ENCODE measurements at regions of chr6 and their contacts with region 1.

Region 1: DNA sequence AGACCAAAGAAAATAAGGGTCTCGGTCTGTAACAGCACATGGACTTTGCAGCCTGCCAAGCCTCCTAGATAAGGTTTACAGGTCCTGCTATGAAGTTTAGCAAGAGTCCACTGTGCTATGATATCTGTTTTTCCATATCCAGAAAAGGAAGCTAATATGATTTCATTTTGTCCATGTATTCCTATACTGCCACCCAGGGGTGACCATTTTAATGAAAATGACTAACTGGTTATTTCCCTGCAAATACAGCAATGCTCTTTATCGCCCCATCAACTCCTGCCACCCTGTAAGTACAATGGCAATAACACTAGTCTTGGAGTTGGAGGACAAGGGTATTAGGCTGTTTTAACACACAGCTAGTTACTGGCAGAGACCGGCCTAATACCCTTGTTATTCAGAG is 115.1 kb upstream of the GLP1R start:
- DNase-seq: peak; percentile 71
- ATAC-seq: peak; percentile 90
- H3K4me3 ChIP-seq: no peak overlapping the region
- H3K27ac ChIP-seq: no peak overlapping the region
- H3K4me1 ChIP-seq: no peaks in the 10 kb centered on the region
- H3K27me3 ChIP-seq: peaks cover 78% of the 10 kb centered on the region
- CTCF ChIP-seq: peak; percentile 70

Region 2: GRCh38 chr6:38720295-38720694 is 213.1 kb before region 1 on chr6:
- CTCF ChIA-PET with region 1: no interaction called
- POLR2A ChIA-PET with region 1: no interaction called
- intact Hi-C with region 1: loop called (anchors 10 kb)
- DNase-seq: peak; percentile 60
- ATAC-seq: peak; percentile 54
- H3K4me3 ChIP-seq: no peak overlapping the region
- H3K27ac ChIP-seq: no peak overlapping the region
- H3K4me1 ChIP-seq: peaks cover 9% of the 10 kb centered on the region; the same call in 1 of the 2 replicates
- H3K27me3 ChIP-seq: no peaks in the 10 kb centered on the region
- CTCF ChIP-seq: peak; percentile 62

Region 3: GRCh38 chr6:38806271-38806670 is 127.2 kb before region 1 on chr6:
- CTCF ChIA-PET with region 1: interaction called, 4 read pairs
- POLR2A ChIA-PET with region 1: no interaction called
- intact Hi-C with region 1: loop called (anchors 1 kb)
- DNase-seq: no peak
- ATAC-seq: peak; percentile 73; the same call in 1 of the 2 replicates
- H3K4me3 ChIP-seq: no peak overlapping the region
- H3K27ac ChIP-seq: no peak overlapping the region
- H3K4me1 ChIP-seq: peaks cover 17% of the 10 kb centered on the region; the same call in 1 of the 2 replicates
- H3K27me3 ChIP-seq: no peaks in the 10 kb centered on the region
- CTCF ChIP-seq: peak; percentile 37; the same call in 1 of the 2 replicates

Region 4: DNA sequence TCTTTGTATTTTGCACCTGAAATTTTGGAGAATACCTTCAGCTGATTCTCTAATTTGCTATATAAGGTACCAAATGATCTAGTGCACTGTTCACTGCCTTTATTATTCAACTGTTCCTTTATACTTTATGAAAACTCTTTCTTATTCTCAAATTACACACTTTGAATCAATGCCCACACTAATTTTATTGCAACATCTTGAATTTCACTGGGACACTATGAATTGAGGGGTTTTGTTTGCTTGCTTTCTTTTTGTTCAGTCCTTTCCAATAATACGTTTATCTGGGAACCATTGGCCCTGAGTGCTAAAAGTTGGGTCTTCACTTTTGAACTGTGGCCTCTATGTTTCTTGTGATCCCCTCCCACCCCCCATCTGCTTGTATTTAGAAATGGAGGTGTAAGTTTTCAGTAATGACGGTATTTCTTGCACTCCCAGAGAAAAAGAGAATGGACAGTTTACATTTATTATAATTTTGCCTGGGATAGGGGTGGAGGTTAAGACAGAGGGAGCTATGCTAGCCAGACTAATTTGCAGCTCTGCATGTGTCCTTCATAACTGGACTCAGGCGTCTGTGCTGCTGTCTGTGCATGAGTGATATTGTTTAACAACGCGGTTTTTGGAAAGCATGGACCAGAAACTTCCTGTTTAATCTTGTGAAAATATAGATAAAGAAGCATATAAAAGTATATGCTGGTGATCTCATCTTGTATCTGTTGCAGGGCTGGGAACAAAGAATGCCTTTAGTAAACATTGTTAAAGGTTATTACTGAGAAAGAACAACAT is 120.2 kb before region 1 on chr6:
- CTCF ChIA-PET with region 1: no interaction called
- POLR2A ChIA-PET with region 1: no interaction called
- intact Hi-C with region 1: loop called (anchors 2 kb)
- DNase-seq: peak; percentile 84
- ATAC-seq: peak; percentile 95
- H3K4me3 ChIP-seq: peak overlapping the region; percentile 46
- H3K27ac ChIP-seq: peak overlapping the region; percentile 85
- H3K4me1 ChIP-seq: peaks cover 29% of the 10 kb centered on the region
- H3K27me3 ChIP-seq: peaks cover 8% of the 10 kb centered on the region; the same call in 1 of the 2 replicates
- CTCF ChIP-seq: no peak

Region 5: GRCh38 chr6:38871741-38872568 is 61.5 kb before region 1 on chr6:
- CTCF ChIA-PET with region 1: no interaction called
- POLR2A ChIA-PET with region 1: no interaction called
- intact Hi-C with region 1: loop called (anchors 1 kb)
- DNase-seq: peak; percentile 76
- ATAC-seq: peak; percentile 72
- H3K4me3 ChIP-seq: no peak overlapping the region
- H3K27ac ChIP-seq: no peak overlapping the region
- H3K4me1 ChIP-seq: no peaks in the 10 kb centered on the region; the same call in 1 of the 2 replicates
- H3K27me3 ChIP-seq: 0 out of 2 replicates have a peak, but pooled peaks cover 5% of the 10 kb centered on the region
- CTCF ChIP-seq: peak; percentile 98

Measured in PC-3 (cell line).